Activated CD8-positive, alpha-beta memory T cell treated with anti-CD3 and anti-CD28 coated beads, Interleukin-2, amount 10 ng/mL, durations not matched to agents 7 days and 5 days (primary cell): ENCODE measurements at regions of chr4 and their contacts with region 1.

Region 1: GRCh38 chr4:127997534-127998388 is 32.6 kb downstream of the ABHD18 start:
- DNase-seq: peak; percentile 54
- ATAC-seq: peak; percentile 91
- H3K4me3 Mint-ChIP-seq: no peak overlapping the region
- H3K27ac Mint-ChIP-seq: no peak overlapping the region
- H3K4me1 Mint-ChIP-seq: peaks cover 29% of the 10 kb centered on the region
- H3K27me3 Mint-ChIP-seq: no peaks in the 10 kb centered on the region

Region 2: GRCh38 chr4:127965062-127965802 is 32.5 kb before region 1 on chr4 and contains the starts of genes ABHD18 and MFSD8:
- CTCF ChIA-PET with region 1: interaction called, 10 read pairs
- DNase-seq: peak; percentile 100
- ATAC-seq: peak; percentile 96
- H3K4me3 Mint-ChIP-seq: peak within 1 kb of the TSS; percentile 93
- H3K27ac Mint-ChIP-seq: peak within 1 kb of the TSS; percentile 96
- H3K4me1 Mint-ChIP-seq: peaks cover 42% of the 10 kb centered on the region
- H3K27me3 Mint-ChIP-seq: no peaks in the 10 kb centered on the region
- total RNA-seq, gene ABHD18: 21.0 to 23.7 TPM
- total RNA-seq, gene MFSD8: 19.9 to 24.6 TPM

Region 3: DNA sequence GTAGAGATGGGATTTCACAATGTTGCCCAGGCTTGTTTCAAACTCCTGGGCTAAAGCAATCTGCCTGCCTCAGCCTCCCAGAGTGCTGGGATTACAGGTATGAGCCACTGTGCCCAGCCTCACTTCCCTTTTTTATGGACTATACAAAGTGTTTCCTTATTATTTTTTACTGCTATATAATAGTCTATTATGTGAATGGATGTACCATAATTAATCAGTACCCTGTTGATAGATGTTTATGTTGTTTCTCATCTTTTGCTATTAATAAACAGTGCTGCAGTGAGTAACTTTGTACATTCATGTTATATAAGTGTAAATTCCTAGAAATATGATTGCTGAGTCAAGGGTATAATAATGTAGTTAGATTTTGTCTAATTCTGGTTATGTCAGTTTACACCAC is 27.6 kb after region 1 on chr4:
- CTCF ChIA-PET with region 1: no interaction called
- DNase-seq: no peak
- ATAC-seq: no peak
- H3K4me3 Mint-ChIP-seq: no peak overlapping the region
- H3K27ac Mint-ChIP-seq: no peak overlapping the region
- H3K4me1 Mint-ChIP-seq: no peaks in the 10 kb centered on the region
- H3K27me3 Mint-ChIP-seq: no peaks in the 10 kb centered on the region